Endothelial cell of umbilical vein (primary cell): ENCODE measurements at regions of chr3 and their contacts with region 1.

Region 1: GRCh38 chr3:8506571-8507061 is 5.0 kb downstream of the LMCD1 start:
- DNase-seq: peak; percentile 60
- H3K4me3 ChIP-seq: no peak overlapping the region
- H3K27ac ChIP-seq: peak overlapping the region; percentile 30
- H3K4me1 ChIP-seq: peaks cover 64% of the 10 kb centered on the region
- H3K27me3 ChIP-seq: no peaks in the 10 kb centered on the region
- CTCF ChIP-seq: no peak
- POLR2A ChIP-seq: no peak

Region 2: GRCh38 chr3:8027954-8028353 is 478.7 kb before region 1 on chr3:
- CTCF ChIA-PET with region 1: no interaction called
- POLR2A ChIA-PET with region 1: no interaction called
- dilution Hi-C with region 1: no loop called
- intact Hi-C with region 1: no loop called
- DNase-seq: no peak
- H3K4me3 ChIP-seq: no peak overlapping the region
- H3K27ac ChIP-seq: no peak overlapping the region
- H3K4me1 ChIP-seq: no peaks in the 10 kb centered on the region
- H3K27me3 ChIP-seq: no peaks in the 10 kb centered on the region
- CTCF ChIP-seq: no peak
- POLR2A ChIP-seq: no peak

Region 3: DNA sequence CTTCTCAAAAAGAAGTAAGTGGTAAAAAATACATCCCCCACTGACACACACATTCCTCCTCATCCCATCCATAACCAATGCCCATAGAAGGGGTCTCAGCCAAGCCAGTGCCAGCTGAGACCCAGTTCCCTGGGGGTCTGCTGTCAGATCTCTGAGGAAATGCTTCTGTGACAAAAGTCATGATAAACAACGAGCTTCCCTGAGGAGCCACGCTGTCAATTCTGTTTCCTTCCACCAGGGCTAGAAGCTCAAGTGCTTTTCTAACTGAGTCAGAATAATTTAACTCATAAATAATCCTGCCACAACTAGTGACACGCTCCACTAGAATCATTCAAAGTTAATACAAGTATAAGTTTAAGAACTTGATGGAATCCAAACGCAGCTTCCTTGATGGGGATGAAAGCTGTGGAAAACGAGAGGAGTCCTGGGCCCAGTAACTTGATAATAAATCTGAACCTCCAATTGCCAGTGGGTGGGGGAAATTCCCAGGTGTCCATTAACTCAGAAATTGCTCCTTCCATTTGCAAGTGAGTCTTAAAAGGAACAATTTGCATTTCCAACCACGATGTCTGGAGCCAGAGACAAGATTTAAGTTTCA is 353.7 kb before region 1 on chr3:
- CTCF ChIA-PET with region 1: no interaction called
- POLR2A ChIA-PET with region 1: no interaction called
- dilution Hi-C with region 1: no loop called
- intact Hi-C with region 1: no loop called
- DNase-seq: no peak
- H3K4me3 ChIP-seq: no peak overlapping the region
- H3K27ac ChIP-seq: no peak overlapping the region
- H3K4me1 ChIP-seq: no peaks in the 10 kb centered on the region
- H3K27me3 ChIP-seq: no peaks in the 10 kb centered on the region
- CTCF ChIP-seq: no peak
- POLR2A ChIP-seq: no peak

Region 4: DNA sequence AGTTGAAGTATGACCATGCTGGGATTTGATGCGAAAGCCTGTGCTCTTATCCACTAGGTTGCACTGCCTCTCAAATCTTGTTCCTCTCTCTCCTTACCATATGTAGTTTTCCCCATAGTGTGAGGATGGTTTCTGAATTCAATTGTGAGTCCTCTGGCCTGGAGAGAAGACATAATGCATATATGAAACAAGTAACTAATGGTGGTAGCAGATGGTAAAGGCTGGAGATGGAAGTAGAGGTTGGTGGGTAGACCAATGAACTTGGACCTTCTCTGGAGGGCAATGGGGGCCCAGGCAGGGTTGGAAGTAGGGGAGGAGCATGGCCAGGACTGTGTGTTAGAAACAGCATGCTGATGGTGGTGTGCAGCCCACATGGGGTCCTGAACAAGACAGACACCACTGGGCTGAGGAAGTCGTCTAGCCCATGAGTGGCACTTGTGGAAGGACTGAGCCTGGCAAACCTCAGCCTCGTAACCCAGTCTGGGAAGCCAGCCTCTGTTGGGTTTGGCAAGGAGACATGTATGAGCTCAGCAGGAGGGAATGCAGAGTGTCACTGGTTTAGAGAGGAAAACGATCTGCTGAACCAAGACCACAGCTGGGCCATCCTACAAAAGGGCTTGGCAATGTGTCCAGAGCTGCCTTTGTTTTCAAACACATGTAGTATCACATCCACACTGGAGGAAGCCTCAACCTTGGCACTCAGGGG is 23.5 kb before region 1 on chr3:
- CTCF ChIA-PET with region 1: interaction called, 19 read pairs
- POLR2A ChIA-PET with region 1: interaction called, 9 read pairs
- dilution Hi-C with region 1: no loop called
- intact Hi-C with region 1: loop called (anchors 1 kb)
- DNase-seq: peak; percentile 96
- H3K4me3 ChIP-seq: no peak overlapping the region
- H3K27ac ChIP-seq: peak overlapping the region; percentile 66
- H3K4me1 ChIP-seq: peaks cover 16% of the 10 kb centered on the region
- H3K27me3 ChIP-seq: no peaks in the 10 kb centered on the region
- CTCF ChIP-seq: no peak
- POLR2A ChIP-seq: no peak

Region 5: DNA sequence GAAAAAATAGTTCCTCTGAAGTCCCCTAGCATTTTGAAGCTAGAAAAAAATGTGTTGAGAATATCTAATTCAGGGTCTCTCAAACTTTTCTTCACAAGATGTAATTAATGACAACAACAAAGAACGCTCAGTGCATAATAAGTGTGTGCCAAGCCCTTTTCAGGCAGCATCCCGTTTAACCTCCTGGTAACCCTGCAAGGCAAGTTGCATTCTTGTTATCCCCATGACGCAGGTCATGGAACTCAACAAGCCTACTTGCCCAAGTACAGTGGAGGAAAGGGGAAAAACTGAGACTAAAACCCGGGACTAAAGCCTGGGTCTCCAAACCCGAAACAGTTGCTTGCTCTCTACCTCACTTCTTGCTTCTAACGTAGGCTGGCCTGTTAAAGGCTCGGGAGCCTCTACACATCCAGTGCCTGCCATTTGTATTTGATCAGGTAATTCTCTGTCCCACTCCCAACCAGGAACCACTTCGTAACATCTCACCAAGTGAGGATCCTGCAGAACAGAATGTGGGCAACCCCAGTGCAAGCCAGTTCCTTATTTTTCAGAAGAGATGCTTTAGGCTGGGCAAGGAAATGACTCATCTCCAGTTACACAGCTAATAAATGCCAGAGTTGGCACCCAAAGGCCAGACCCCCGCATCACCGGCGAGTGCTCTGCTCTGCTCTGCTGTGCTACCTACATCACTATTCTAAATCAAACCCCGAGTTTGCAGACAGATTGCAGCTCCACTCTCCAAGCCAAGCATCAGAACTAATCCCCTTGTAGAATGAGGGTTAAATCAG is 23.3 kb after region 1 on chr3:
- CTCF ChIA-PET with region 1: interaction called, 5 read pairs
- POLR2A ChIA-PET with region 1: no interaction called
- dilution Hi-C with region 1: no loop called
- intact Hi-C with region 1: loop called (anchors 1 kb)
- DNase-seq: peak; percentile 36
- H3K4me3 ChIP-seq: no peak overlapping the region
- H3K27ac ChIP-seq: no peak overlapping the region
- H3K4me1 ChIP-seq: peaks cover 16% of the 10 kb centered on the region
- H3K27me3 ChIP-seq: no peaks in the 10 kb centered on the region
- CTCF ChIP-seq: no peak
- POLR2A ChIP-seq: no peak

Region 6: GRCh38 chr3:8638994-8639658 is 132.5 kb after region 1 on chr3:
- CTCF ChIA-PET with region 1: no interaction called
- POLR2A ChIA-PET with region 1: no interaction called
- dilution Hi-C with region 1: no loop called
- intact Hi-C with region 1: no loop called
- DNase-seq: no peak
- H3K4me3 ChIP-seq: no peak overlapping the region
- H3K27ac ChIP-seq: no peak overlapping the region
- H3K4me1 ChIP-seq: no peaks in the 10 kb centered on the region
- H3K27me3 ChIP-seq: peaks cover 0 to 4% of the 10 kb centered on the region in 2 experiments
- CTCF ChIP-seq: no peak
- POLR2A ChIP-seq: no peak